PC-9 (cell line): ENCODE measurements at regions of chrX and their contacts with region 1.

Region 1: DNA sequence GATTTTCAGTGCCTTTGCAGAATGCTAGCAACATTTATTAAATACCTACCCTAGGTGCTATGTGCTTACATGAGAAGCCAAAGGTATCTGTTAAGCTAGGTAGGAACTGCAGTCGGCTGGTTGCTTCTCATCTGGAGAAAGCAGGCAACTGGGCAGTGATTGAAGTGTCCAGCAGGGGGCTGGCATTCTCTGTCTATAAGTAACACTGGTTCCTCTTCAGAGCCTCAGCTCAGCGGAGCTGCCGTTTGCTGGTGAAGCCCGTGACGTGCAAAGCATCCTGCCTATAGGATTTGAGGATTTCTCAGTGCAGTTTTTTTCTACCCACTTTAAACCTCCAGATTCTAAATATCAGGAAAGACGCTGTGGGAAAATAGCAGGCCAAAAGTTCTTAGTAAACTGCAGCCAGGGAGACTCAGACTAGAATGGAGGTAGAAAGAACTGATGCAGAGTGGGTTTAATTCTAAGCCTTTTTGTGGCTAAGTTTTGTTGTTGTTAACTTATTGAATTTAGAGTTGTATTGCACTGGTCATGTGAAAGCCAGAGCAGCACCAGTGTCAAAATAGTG is at the start of gene GRPR:
- DNase-seq: peak; percentile 61 to 72
- H3K4me3 ChIP-seq: no peak within 1 kb of the TSS
- H3K27ac ChIP-seq: no peak within 1 kb of the TSS
- H3K4me1 ChIP-seq: no peaks in the 10 kb centered on the region
- H3K27me3 ChIP-seq: no peaks in the 10 kb centered on the region
- CTCF ChIP-seq: peak; percentile 80
- total RNA-seq, gene GRPR: 1.1 TPM in 1 of 2 replicates, not detected in the other

Region 2: DNA sequence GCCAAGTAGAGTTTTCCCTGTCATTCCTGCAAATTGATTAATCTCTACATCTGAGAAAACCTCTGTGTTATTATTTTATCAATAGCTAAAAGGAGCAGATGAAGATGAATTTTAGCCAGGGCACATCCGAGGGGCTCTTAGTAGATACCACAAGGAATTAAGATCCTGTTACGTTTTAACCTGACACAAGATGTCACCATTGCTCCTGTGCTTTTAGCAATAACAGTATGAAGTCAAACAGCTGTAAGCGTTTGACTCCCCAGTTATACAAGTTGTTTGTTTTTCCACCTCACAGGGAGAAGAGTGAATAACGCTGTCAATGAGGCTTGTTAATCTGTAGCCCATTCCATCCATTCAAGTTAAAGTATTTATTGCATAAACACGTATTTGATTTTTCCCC is 192.7 kb before region 1 on chrX:
- CTCF ChIA-PET with region 1: no interaction called
- POLR2A ChIA-PET with region 1: no interaction called
- intact Hi-C with region 1: loop called (anchors 2 kb)
- DNase-seq: no peak
- H3K4me3 ChIP-seq: no peak overlapping the region
- H3K27ac ChIP-seq: no peak overlapping the region
- H3K4me1 ChIP-seq: no peaks in the 10 kb centered on the region
- H3K27me3 ChIP-seq: no peaks in the 10 kb centered on the region
- CTCF ChIP-seq: peak; percentile 27; the same call in 1 of the 2 replicates

Region 3: GRCh38 chrX:15988661-15989603 is 134.4 kb before region 1 on chrX:
- CTCF ChIA-PET with region 1: no interaction called
- POLR2A ChIA-PET with region 1: no interaction called
- intact Hi-C with region 1: no loop called
- DNase-seq: no peak
- H3K4me3 ChIP-seq: no peak overlapping the region
- H3K27ac ChIP-seq: no peak overlapping the region
- H3K4me1 ChIP-seq: no peaks in the 10 kb centered on the region
- H3K27me3 ChIP-seq: no peaks in the 10 kb centered on the region
- CTCF ChIP-seq: no peak

Region 4: DNA sequence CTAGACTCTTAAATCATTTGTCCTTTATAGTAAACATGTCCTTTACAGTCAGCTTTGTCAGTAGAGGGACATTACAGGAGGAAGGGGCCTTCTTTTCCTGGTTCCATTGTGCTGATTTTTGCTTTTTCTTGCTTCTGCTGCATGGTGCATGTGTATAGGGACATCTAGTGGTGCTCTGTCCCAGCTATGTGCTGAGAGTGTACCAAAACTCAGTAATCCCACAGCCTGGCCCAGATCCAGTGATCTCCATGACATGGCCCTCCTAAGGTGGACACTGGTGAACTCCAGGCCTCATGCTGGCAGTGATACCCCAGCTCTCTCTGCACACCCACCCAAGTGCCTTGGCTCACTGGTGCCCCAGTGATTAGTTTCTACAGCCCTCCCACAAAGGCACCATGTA is 89.1 kb after region 1 on chrX:
- CTCF ChIA-PET with region 1: no interaction called
- POLR2A ChIA-PET with region 1: no interaction called
- intact Hi-C with region 1: loop called (anchors 1 kb)
- DNase-seq: no peak
- H3K4me3 ChIP-seq: no peak overlapping the region
- H3K27ac ChIP-seq: no peak overlapping the region
- H3K4me1 ChIP-seq: no peaks in the 10 kb centered on the region
- H3K27me3 ChIP-seq: no peaks in the 10 kb centered on the region
- CTCF ChIP-seq: no peak

Region 5: GRCh38 chrX:16250296-16250695 is 127.0 kb after region 1 on chrX:
- CTCF ChIA-PET with region 1: no interaction called
- POLR2A ChIA-PET with region 1: no interaction called
- intact Hi-C with region 1: no loop called
- DNase-seq: no peak
- H3K4me3 ChIP-seq: no peak overlapping the region
- H3K27ac ChIP-seq: no peak overlapping the region
- H3K4me1 ChIP-seq: no peaks in the 10 kb centered on the region
- H3K27me3 ChIP-seq: no peaks in the 10 kb centered on the region
- CTCF ChIP-seq: no peak

Region 6: GRCh38 chrX:16267431-16267830 is 144.1 kb after region 1 on chrX:
- CTCF ChIA-PET with region 1: no interaction called
- POLR2A ChIA-PET with region 1: no interaction called
- intact Hi-C with region 1: no loop called
- DNase-seq: no peak
- H3K4me3 ChIP-seq: no peak overlapping the region
- H3K27ac ChIP-seq: no peak overlapping the region
- H3K4me1 ChIP-seq: no peaks in the 10 kb centered on the region
- H3K27me3 ChIP-seq: no peaks in the 10 kb centered on the region
- CTCF ChIP-seq: no peak

Region 7: DNA sequence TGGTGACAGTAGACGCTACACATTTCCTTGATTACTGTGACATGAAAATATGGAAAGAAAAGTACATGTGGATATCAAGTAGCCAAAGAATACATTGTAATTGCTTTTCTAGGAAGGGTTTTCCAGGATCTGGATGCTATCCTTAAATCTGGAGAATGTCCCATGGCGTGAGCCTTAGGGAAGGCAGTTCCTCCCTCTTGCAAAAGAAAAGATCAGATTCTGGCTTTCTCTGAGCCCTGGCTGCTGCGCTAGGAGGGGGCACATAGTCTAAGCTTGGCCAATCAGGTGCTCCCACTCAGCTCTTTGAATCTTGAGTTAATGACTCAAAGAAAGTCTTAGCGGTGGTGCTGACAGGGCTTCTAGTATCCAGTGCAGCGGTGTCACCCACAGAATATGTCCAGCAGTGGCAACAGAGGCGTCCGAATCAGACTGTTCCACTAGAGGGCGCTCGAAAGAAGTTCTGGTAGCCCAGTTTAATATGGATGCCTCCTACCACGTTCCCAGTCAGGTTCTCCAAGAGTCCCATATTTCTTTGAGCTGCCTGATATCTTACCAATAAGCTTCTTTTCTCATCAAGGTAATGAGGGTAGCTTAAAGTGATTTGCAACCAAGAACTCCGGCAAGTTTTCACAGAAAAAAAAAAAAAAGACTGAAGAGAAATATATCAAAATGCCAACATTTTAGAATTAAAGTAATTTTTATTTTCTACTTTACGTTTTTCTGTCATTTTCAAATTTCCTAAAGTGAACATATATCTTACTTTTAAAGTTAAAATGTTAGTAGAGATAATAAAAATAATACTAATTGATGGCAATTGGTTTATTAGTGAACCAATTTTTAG is 313.3 kb after region 1 on chrX:
- CTCF ChIA-PET with region 1: interaction called, 4 read pairs
- POLR2A ChIA-PET with region 1: no interaction called
- intact Hi-C with region 1: loop called (anchors 2 kb)
- DNase-seq: peak; percentile 42 to 60
- H3K4me3 ChIP-seq: no peak overlapping the region
- H3K27ac ChIP-seq: no peak overlapping the region
- H3K4me1 ChIP-seq: no peaks in the 10 kb centered on the region
- H3K27me3 ChIP-seq: no peaks in the 10 kb centered on the region
- CTCF ChIP-seq: peak; percentile 75